ENCODE measurements at regions of chr12 and their contacts with region 1.

Region 1: GRCh38 chr12:124391340-124392261 is 96.7 kb downstream of the RFLNA start:
- DNase-seq: peak; percentile 93 to 96 (median 94)
- H3K4me3 ChIP-seq: peak overlapping the region; percentile 32 to 85 (median 43)
- H3K4me3 Mint-ChIP-seq: peak overlapping the region; percentile 96 to 98
- H3K27ac ChIP-seq: peak overlapping the region; percentile 99 to 100
- H3K27ac Mint-ChIP-seq: peak overlapping the region; percentile 99 to 100 (median 100)
- H3K4me1 ChIP-seq: peaks cover 72 to 77% of the 10 kb centered on the region in 2 donors
- H3K4me1 Mint-ChIP-seq: peaks cover 63% of the 10 kb centered on the region
- H3K27me3 ChIP-seq: no peaks in the 10 kb centered on the region
- H3K27me3 Mint-ChIP-seq: peaks cover 0 to 2% (median 2%) of the 10 kb centered on the region in 3 donors
- CTCF ChIP-seq: no peak

Region 2: GRCh38 chr12:124233041-124233796 is 158.4 kb before region 1 on chr12:
- intact Hi-C with region 1: no loop called
- DNase-seq: no peak
- H3K4me3 ChIP-seq: no peak overlapping the region
- H3K4me3 Mint-ChIP-seq: no peak overlapping the region
- H3K27ac ChIP-seq: peak overlapping the region in 1 of 2 donors; percentile 27
- H3K27ac Mint-ChIP-seq: peak overlapping the region in 3 of 7 donors; percentile 15 to 83 (median 42)
- H3K4me1 ChIP-seq: peaks cover 17 to 25% of the 10 kb centered on the region in 2 donors
- H3K4me1 Mint-ChIP-seq: peaks cover 28% of the 10 kb centered on the region
- H3K27me3 ChIP-seq: no peaks in the 10 kb centered on the region
- H3K27me3 Mint-ChIP-seq: peaks cover 0 to 2% (median 2%) of the 10 kb centered on the region in 3 donors
- CTCF ChIP-seq: no peak

Region 3: GRCh38 chr12:124347716-124348357 is 43.8 kb before region 1 on chr12:
- intact Hi-C with region 1: no loop called
- DNase-seq: peak in 2 of 3 donors; percentile 15 to 21
- H3K4me3 ChIP-seq: no peak overlapping the region
- H3K4me3 Mint-ChIP-seq: no peak overlapping the region
- H3K27ac ChIP-seq: no peak overlapping the region
- H3K27ac Mint-ChIP-seq: peak overlapping the region in 1 of 7 donors; percentile 76
- H3K4me1 ChIP-seq: no peaks in the 10 kb centered on the region
- H3K4me1 Mint-ChIP-seq: peaks cover 1% of the 10 kb centered on the region
- H3K27me3 ChIP-seq: no peaks in the 10 kb centered on the region
- H3K27me3 Mint-ChIP-seq: no peaks in the 10 kb centered on the region
- CTCF ChIP-seq: peak; percentile 67

Region 4: DNA sequence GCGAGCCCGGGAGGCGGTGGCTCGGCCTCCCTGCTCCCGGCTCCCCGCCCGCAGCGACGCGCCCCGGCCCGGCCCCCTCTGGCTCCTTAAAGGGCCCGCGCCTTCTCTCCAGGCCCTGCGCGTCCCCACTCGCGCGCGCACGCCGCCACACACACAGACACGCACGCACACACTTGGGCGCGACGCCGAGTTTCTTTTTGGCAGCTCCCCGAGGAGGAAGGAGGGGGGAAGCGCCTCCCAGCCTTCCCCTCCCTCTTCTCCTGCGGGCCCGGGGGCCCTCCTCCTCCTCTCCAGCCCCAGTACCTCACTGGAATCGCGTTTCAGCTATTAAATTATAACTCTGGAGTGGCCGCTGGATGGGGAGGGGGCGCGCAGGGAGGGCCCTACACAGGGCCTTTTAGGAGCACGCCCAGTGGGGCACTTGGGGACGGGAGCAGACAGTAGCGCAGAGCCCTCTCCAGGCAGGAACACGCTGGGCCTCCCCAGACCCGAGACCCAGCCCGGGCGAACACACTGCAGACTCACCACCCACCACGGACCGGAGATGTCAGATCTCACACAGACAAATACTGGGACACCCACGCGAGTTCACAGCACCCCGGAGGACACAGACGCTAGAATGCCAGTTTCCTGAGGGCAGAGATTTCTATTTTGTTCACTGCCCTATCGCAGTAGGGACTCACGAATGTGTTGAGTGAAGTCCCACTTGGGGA is 176.2 kb after region 1 on chr12:
- intact Hi-C with region 1: loop called in 1 of 2 experiments (anchors 5 kb)
- DNase-seq: peak; percentile 91 to 95 (median 95)
- H3K4me3 ChIP-seq: peak overlapping the region; percentile 14 to 74 (median 24)
- H3K4me3 Mint-ChIP-seq: peak overlapping the region; percentile 77 to 78
- H3K27ac ChIP-seq: peak overlapping the region; percentile 86 to 96
- H3K27ac Mint-ChIP-seq: peak overlapping the region; percentile 94 to 98 (median 96)
- H3K4me1 ChIP-seq: peaks cover 44 to 50% of the 10 kb centered on the region in 2 donors
- H3K4me1 Mint-ChIP-seq: peaks cover 47% of the 10 kb centered on the region
- H3K27me3 ChIP-seq: no peaks in the 10 kb centered on the region
- H3K27me3 Mint-ChIP-seq: no peaks in the 10 kb centered on the region
- CTCF ChIP-seq: no peak

Region 5: DNA sequence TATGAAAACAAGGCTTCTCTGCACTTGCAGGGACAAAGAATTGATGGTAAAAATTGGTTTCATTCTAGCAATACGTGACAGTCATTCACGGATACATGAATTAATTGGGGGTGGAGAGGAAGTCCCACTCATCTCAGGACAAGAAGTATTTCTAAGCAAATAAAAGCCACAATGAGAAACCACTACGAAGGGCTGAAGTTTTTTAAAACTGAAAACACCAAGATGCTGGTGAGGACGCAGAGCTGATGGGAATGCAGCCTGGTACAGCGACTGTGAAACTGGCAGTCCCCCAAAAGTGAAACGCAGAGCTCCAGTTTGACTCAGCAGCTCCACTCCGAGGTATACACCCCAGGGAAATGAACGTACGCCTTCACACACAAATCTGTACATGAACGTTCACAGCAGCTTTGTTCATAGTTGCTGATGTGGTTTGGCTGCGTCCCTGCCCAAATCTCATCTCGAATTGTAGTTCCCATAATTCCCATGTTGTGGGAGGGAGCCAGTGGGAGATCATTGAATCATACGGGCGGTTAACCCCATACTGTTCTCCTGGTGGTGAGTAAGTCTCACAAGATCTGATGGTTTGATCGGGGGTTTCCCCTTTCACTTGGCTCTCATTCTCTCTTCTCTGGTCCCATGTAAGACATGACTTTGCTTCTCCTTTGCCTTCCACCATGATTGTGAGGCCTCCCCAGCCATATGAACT is 383.0 kb after region 1 on chr12:
- intact Hi-C with region 1: loop called in 1 of 2 experiments (anchors 2 kb)
- DNase-seq: peak; percentile 87 to 94 (median 89)
- H3K4me3 ChIP-seq: peak overlapping the region; percentile 16 to 63 (median 26)
- H3K4me3 Mint-ChIP-seq: peak overlapping the region; percentile 59 to 82
- H3K27ac ChIP-seq: peak overlapping the region; percentile 87 to 97
- H3K27ac Mint-ChIP-seq: peak overlapping the region; percentile 94 to 97 (median 96)
- H3K4me1 ChIP-seq: peaks cover 66 to 70% of the 10 kb centered on the region in 2 donors
- H3K4me1 Mint-ChIP-seq: peaks cover 71% of the 10 kb centered on the region
- H3K27me3 ChIP-seq: no peaks in the 10 kb centered on the region
- H3K27me3 Mint-ChIP-seq: peaks cover 2 to 10% (median 5%) of the 10 kb centered on the region in 3 donors
- CTCF ChIP-seq: no peak